PC-3 (cell line): ENCODE measurements at regions of chr4 and their contacts with region 1.

Region 1: DNA sequence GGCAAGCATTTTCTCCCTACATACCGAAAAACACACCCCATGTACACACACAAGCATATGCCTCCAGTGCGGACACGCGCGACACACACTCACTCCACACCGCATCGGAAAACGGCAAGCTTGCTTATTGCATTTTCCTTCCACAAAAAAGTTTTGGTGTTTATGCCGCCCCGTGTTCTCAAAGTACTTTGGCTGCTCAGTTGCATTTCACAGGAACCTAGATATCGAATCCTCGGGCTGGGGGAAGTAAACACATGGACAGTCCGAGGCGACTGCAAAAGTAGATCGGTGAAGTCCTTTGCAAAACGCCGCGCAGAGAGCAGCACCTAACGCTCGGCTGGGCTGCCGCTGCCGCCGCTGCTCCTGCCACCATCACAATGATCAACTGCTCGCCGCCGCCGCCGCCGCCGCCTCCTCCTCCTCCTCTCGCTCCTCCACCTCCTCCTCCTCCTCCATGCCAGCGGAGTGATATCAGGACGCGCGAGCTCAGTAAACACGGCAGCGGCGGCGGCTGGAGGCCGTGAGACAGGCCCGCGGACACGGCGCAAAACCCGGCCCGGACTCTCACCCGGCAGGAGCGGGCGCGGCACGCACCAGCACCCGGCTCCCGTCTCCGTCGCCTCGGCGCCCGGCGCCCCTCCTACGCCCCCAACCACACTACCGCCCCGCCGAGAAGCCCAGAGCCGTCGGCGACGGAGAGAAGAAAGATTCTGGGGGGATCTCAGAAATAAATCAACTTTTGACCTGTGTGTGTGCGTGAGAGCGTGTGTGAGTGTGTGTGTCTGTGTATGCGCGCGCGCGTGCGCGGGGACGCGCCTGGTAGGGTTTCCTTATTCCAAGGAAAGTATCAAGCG is at the start of gene MAML3:
- DNase-seq: peak; percentile 87
- ATAC-seq: peak; percentile 14
- H3K4me3 ChIP-seq: peak within 1 kb of the TSS; percentile 88
- H3K27ac ChIP-seq: peak within 1 kb of the TSS; percentile 93
- H3K4me1 ChIP-seq: peaks cover 8% of the 10 kb centered on the region
- H3K27me3 ChIP-seq: no peaks in the 10 kb centered on the region
- CTCF ChIP-seq: no peak
- total RNA-seq, gene MAML3: 3.9 and 4.3 TPM in 2 replicates

Region 2: DNA sequence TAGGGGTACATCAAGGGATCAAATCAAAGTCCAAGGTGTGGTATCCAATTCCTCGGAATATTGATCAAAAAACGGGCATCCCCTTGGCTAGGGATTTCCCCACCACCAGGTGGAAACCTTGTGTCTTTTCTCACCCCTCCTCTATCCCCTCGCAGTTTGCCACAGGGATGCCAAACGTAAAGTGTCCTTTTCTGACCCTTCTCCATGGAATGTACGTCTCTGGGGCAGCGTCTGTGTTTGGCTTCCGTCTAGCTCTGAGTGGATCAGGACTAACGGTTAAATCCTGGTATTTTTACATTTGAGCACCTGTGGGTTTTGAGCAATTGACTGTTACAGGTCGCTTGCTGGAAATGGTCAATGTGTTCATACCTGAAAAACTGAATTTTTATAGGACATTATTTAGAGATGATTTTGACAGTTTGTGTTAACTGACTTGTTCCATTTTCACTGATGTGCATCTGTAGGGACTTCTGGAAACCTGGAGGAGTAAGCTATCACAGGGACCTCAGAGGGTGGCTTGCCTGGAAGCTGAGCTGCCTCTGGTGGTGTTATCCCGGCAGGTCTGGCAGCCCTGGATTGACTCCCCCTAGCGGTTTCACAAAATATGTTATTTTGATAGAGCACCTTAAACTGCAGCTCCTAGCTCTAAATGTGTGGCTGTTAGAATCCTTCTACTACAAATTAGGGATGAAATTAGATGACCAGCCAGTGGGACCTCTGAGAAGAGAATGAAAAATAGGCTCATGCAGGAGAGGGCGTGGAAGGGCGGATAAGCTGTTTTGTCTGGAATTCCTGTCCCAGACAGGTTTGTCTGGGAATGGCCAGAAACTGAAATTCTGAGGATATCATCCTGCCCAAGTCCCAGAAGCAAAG is 497.1 kb before region 1 on chr4:
- CTCF ChIA-PET with region 1: no interaction called
- POLR2A ChIA-PET with region 1: no interaction called
- intact Hi-C with region 1: loop called (anchors 5 kb)
- DNase-seq: peak; percentile 80
- ATAC-seq: peak; percentile 87
- H3K4me3 ChIP-seq: peak overlapping the region; percentile 53; the same call in 1 of the 2 replicates
- H3K27ac ChIP-seq: 0 out of 2 replicates have a peak overlapping the region, but pooled peaks have one; percentile 30
- H3K4me1 ChIP-seq: peaks cover 14% of the 10 kb centered on the region
- H3K27me3 ChIP-seq: no peaks in the 10 kb centered on the region
- CTCF ChIP-seq: peak; percentile 72

Region 3: DNA sequence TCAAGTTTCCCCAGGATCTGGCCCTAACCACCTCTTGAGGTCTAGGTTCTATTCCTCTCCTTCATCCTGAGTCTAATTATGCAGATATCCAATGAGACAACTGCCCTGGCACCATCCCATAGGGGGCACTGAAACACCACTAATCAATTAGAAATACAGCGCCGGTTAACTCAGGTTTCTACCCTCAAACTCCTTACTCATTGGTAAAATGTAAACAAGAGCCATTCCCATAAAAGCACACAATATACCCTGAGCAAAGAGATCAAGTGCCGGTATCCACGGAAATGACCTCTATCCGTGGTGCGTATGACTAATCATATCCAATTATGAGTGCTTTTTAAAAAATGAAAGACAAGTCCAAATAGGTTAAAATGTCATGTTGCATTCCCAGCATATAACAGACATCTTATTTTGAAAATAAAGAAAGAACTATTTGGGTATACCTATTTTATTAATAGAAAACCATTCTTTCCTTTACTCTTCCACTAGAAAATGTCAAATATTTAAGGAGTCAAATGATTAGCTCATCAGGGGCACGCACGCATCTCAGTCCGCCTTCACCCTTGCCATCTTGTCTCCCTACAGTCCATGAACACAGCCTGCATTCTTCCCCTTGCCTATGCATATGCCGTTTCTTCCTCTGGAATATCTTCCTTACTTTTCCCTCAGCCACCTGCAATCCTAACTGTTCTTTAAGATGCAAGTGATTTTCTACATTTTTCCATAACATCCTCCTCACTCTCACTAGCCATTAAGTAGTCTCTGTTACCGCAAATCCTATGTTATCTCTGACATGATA is 141.1 kb before region 1 on chr4:
- CTCF ChIA-PET with region 1: no interaction called
- POLR2A ChIA-PET with region 1: no interaction called
- intact Hi-C with region 1: loop called (anchors 1 kb)
- DNase-seq: peak; percentile 93
- ATAC-seq: peak; percentile 99
- H3K4me3 ChIP-seq: 0 out of 2 replicates have a peak overlapping the region, but pooled peaks have one; percentile 13
- H3K27ac ChIP-seq: peak overlapping the region; percentile 82
- H3K4me1 ChIP-seq: peaks cover 22% of the 10 kb centered on the region
- H3K27me3 ChIP-seq: no peaks in the 10 kb centered on the region
- CTCF ChIP-seq: peak; percentile 83

Region 4: GRCh38 chr4:140085062-140085622 is 68.8 kb before region 1 on chr4:
- CTCF ChIA-PET with region 1: no interaction called
- POLR2A ChIA-PET with region 1: no interaction called
- intact Hi-C with region 1: loop called (anchors 1 kb)
- DNase-seq: peak; percentile 80
- ATAC-seq: peak; percentile 89
- H3K4me3 ChIP-seq: peak overlapping the region; percentile 54
- H3K27ac ChIP-seq: peak overlapping the region; percentile 95
- H3K4me1 ChIP-seq: peaks cover 36% of the 10 kb centered on the region
- H3K27me3 ChIP-seq: no peaks in the 10 kb centered on the region
- CTCF ChIP-seq: no peak

Region 5: GRCh38 chr4:140135529-140136088 is 18.3 kb before region 1 on chr4:
- CTCF ChIA-PET with region 1: interaction called, 4 read pairs
- POLR2A ChIA-PET with region 1: interaction called, 3 read pairs
- intact Hi-C with region 1: loop called (anchors 2 kb)
- DNase-seq: peak; percentile 17
- ATAC-seq: no peak
- H3K4me3 ChIP-seq: no peak overlapping the region
- H3K27ac ChIP-seq: peak overlapping the region; percentile 33
- H3K4me1 ChIP-seq: peaks cover 71% of the 10 kb centered on the region
- H3K27me3 ChIP-seq: no peaks in the 10 kb centered on the region
- CTCF ChIP-seq: no peak

Region 6: DNA sequence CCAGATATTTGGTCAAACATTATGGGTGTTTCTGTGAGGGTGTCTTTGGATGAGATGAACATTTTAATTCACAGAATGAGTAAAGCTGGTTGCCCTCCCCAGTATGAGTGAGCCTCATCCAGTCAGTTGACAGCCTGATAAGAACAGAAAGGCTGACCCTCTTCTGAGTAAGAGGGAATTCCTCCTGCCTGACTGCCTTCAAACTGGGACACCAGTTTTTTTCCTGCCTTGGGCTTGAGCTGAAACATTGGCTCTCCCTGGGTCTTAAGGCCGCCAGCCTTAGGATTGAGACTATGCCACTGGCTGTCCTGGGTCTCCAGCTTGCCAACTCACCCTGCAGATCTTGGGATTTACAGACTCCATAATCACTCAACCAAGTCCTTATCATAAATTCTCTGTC is 14.5 kb after region 1 on chr4:
- CTCF ChIA-PET with region 1: no interaction called
- POLR2A ChIA-PET with region 1: no interaction called
- intact Hi-C with region 1: no loop called
- DNase-seq: no peak
- ATAC-seq: no peak
- H3K4me3 ChIP-seq: no peak overlapping the region
- H3K27ac ChIP-seq: no peak overlapping the region
- H3K4me1 ChIP-seq: no peaks in the 10 kb centered on the region
- H3K27me3 ChIP-seq: no peaks in the 10 kb centered on the region
- CTCF ChIP-seq: no peak

Region 7: DNA sequence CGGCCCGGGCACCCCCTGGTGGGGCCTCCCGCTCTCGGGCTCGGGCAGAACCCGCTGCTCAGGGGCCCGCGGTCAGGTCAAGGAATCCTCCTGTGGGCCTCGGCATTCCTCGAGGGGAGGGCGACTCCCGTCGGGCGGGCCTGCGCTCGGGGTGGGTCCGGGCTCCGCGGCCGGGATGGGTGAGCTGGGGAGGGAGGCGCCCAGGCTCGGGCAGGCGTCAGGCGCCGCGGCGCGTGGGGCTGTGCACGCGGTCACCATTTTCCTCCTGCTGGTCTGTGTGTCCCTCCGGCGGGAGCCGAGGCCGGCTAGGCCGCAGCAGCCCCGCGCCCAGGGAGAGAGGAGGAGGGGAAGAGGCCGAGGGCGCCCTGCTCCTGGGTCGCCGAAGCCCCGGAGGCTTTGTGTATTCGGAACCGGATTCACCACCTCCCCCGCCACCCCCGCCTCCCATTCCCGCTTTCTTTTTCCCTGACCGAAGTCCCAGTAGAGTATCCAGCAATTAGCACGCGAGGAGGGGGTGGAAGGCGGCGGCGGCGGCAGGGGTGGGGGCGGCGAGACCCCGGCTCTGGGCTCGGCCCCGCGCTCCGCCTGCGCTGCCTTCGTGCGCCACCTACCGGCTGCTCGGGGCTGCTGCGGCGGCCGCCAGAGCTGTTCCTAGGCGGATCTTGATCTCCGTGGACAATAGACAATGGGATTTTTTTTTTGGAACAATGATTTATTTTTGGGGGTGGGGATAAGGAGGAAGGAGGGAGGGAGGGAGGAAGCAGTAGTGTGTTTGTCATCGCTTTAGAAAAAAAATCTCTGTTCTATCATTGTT is 99.0 kb after region 1 on chr4:
- CTCF ChIA-PET with region 1: interaction called, 3 read pairs
- POLR2A ChIA-PET with region 1: no interaction called
- intact Hi-C with region 1: loop called (anchors 1 kb)
- DNase-seq: peak; percentile 78
- ATAC-seq: peak; percentile 73
- H3K4me3 ChIP-seq: peak overlapping the region; percentile 59
- H3K27ac ChIP-seq: peak overlapping the region; percentile 77
- H3K4me1 ChIP-seq: peaks cover 59% of the 10 kb centered on the region
- H3K27me3 ChIP-seq: no peaks in the 10 kb centered on the region
- CTCF ChIP-seq: peak; percentile 79